GM12878 (cell line): ENCODE measurements at regions of chr9 and their contacts with region 1.

Region 1: DNA sequence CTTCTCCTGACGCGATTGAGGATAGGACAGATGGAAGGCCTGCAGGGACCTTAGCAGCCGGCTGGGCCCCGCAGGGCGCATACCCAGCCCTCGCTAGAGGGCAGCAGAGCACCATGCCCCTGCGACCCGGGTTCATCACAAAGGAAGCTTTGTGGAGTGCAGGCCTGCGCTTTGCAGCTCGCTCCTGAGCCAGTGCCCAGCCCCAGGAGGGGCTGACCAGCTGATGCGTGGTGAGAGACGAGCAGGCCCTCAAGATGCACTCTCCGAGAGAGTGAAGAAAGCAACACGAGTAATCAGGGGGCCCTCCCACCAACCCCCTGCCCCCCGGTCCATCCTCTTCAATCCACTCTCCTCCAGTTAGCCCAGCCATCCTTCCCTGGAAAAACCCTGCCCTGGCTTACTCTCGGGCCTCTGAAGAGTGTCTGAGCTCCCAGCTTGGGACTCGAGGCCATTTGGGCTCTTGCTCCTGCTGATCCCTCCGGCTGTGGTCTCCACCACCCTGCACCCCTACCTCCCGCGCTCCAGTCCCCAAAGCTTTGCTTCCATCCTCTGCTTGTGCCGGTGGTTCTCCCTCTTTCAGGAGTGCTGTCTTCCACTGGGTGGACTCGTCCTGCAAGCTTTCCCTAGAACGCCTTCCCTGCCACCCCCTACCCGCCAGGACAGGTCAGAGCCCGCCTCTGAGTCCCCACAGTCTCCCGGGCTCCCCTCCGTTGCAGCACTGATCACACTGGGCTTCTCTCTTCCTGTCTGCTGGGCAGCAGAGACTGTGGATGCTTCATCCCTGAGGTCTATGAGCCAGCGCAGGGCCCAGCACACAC is 9.1 kb upstream of the KIF12 start:
- DNase-seq: no peak
- ATAC-seq: peak; percentile 97
- H3K4me3 ChIP-seq: no peak overlapping the region
- H3K27ac ChIP-seq: no peak overlapping the region
- H3K4me1 ChIP-seq: no peaks in the 10 kb centered on the region; the same call in 1 of the 2 replicates
- H3K27me3 ChIP-seq: no peaks in the 10 kb centered on the region; a peak in 1 of 4 replicates
- CTCF ChIP-seq: peak; percentile 75 to 92 (median 88)
- EP300 ChIP-seq: no peak
- POLR2A ChIP-seq: no peak
- RAD21 ChIP-seq: peak; percentile 63

Region 2: GRCh38 chr9:114082017-114082762 is 26.0 kb before region 1 on chr9:
- CTCF ChIA-PET with region 1: interaction called, 15 read pairs
- POLR2A ChIA-PET with region 1: no interaction called
- RAD21 ChIA-PET with region 1: interaction called, 3 read pairs
- SMC1A ChIA-PET with region 1: interaction called, 8 read pairs
- in situ Hi-C with region 1: no loop called
- intact Hi-C with region 1: no loop called
- DNase-seq: peak; percentile 25
- ATAC-seq: peak; percentile 99
- H3K4me3 ChIP-seq: no peak overlapping the region
- H3K27ac ChIP-seq: no peak overlapping the region
- H3K4me1 ChIP-seq: no peaks in the 10 kb centered on the region
- H3K27me3 ChIP-seq: peaks cover 0 to 5% of the 10 kb centered on the region in 2 experiments; a peak in 3 of 4 replicates
- CTCF ChIP-seq: peak; percentile 84 to 93 (median 87)
- EP300 ChIP-seq: no peak
- POLR2A ChIP-seq: no peak
- RAD21 ChIP-seq: peak; percentile 67

Region 3: GRCh38 chr9:114096041-114096511 is 12.1 kb before region 1 on chr9:
- CTCF ChIA-PET with region 1: interaction called, 16 read pairs
- POLR2A ChIA-PET with region 1: no interaction called
- RAD21 ChIA-PET with region 1: no interaction called
- SMC1A ChIA-PET with region 1: interaction called, 3 read pairs
- in situ Hi-C with region 1: no loop called
- intact Hi-C with region 1: no loop called
- DNase-seq: no peak
- ATAC-seq: no peak
- H3K4me3 ChIP-seq: no peak overlapping the region
- H3K27ac ChIP-seq: no peak overlapping the region
- H3K4me1 ChIP-seq: no peaks in the 10 kb centered on the region
- H3K27me3 ChIP-seq: no peaks in the 10 kb centered on the region; a peak in 2 of 4 replicates
- CTCF ChIP-seq: peak in 1 of 3 experiments; percentile 9; a peak in 1 of 6 replicates
- EP300 ChIP-seq: no peak
- POLR2A ChIP-seq: no peak
- RAD21 ChIP-seq: no peak

Region 4: DNA sequence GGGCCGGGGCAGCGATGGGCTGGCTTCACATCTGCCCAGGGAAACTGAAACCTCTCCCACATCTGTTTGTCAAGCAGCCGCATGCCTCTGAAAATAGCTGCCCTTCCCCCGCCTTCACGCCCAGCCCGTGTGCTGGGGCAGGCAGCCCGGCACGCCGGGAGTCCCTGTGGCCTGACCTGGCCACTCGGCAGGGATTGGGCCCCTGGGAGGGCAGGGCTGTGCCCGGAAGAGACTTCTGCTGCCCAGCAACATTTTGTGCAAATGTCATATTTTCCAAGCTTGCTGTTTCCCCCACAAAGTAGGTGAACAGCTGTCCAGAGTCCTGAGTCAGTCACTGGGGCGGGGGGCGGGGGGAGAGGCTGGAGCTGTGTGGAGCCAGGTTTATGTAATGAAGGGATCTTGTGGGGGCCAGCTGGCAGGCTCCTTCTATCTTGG is 55.3 kb after region 1 on chr9:
- CTCF ChIA-PET with region 1: no interaction called
- POLR2A ChIA-PET with region 1: no interaction called
- RAD21 ChIA-PET with region 1: no interaction called
- SMC1A ChIA-PET with region 1: no interaction called
- in situ Hi-C with region 1: no loop called
- intact Hi-C with region 1: no loop called
- DNase-seq: no peak
- ATAC-seq: no peak
- H3K4me3 ChIP-seq: no peak overlapping the region
- H3K27ac ChIP-seq: no peak overlapping the region
- H3K4me1 ChIP-seq: no peaks in the 10 kb centered on the region
- H3K27me3 ChIP-seq: no peaks in the 10 kb centered on the region; a peak in 3 of 4 replicates
- CTCF ChIP-seq: no peak
- EP300 ChIP-seq: no peak
- POLR2A ChIP-seq: no peak
- RAD21 ChIP-seq: no peak